ENCODE measurements at regions of chr22 and their contacts with region 1.

Region 1: DNA sequence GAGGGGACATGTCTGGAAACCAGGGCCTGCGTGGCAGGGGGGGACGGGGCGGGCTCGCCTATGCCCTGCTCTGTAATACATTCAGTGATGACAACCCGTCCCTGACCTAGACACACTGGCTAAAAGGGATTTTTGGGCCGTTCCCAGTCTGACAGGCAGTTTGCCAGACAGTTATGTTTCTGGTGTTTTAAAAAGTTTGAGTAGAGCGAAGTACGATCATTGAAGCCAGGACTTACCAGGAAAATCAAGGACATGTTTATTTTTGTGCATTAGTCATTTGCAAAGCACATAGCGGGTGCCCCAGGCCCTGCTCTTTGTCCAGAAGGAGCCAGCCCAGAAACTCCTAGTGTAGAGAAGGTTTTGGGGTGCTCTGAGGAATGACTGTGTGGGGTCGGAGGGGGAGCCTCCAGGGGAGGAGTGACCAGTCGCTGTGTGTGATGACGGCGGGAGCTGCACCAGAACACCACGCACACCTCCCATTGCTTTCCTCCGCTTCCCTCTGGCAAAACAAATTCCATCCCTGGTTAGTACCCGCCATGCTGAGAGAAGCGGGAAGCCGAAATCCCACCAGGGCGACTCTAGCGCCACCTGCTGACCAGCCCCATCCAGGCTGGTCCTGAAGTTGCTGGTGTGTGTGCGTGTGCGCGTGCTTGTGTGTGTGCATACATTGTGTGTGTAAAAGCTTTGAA is 50.8 kb downstream of the FBLN1 start:
- DNase-seq: peak; percentile 76
- H3K4me3 ChIP-seq: no peak overlapping the region
- H3K27ac ChIP-seq: peak overlapping the region; percentile 37
- H3K4me1 ChIP-seq: no peaks in the 10 kb centered on the region
- H3K27me3 ChIP-seq: no peaks in the 10 kb centered on the region
- CTCF ChIP-seq: peak; percentile 82

Region 2: GRCh38 chr22:45268958-45269844 is 284.3 kb before region 1 on chr22:
- intact Hi-C with region 1: loop called (anchors 5 kb)
- DNase-seq: peak; percentile 87
- H3K4me3 ChIP-seq: peak overlapping the region; percentile 36
- H3K27ac ChIP-seq: no peak overlapping the region
- H3K4me1 ChIP-seq: peaks cover 18% of the 10 kb centered on the region
- H3K27me3 ChIP-seq: no peaks in the 10 kb centered on the region
- CTCF ChIP-seq: peak; percentile 82

Region 3: DNA sequence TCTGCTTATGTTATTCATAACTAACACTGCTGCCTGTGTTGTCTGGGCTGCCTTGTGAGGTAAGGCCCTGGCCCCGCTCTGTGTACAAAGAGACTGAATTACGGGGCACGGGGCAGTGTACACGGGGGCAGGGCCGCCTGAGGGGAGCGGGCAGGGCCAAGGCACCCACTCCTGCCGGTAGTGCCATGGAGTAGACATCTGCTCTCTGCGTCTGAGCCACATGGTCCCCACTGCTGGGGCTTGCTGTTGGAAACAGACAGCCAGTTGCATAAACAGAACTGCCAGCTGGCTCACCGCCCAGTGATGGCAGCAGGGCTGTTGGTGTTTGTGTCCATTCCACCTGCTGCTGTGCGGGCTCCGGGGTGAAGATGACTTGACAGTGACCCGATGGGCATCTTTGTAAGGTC is 224.0 kb before region 1 on chr22:
- intact Hi-C with region 1: loop called (anchors 10 kb)
- DNase-seq: no peak
- H3K4me3 ChIP-seq: no peak overlapping the region
- H3K27ac ChIP-seq: no peak overlapping the region
- H3K4me1 ChIP-seq: no peaks in the 10 kb centered on the region
- H3K27me3 ChIP-seq: no peaks in the 10 kb centered on the region
- CTCF ChIP-seq: no peak

Region 4: GRCh38 chr22:45441138-45441537 is 112.4 kb before region 1 on chr22:
- intact Hi-C with region 1: loop called (anchors 5 kb)
- DNase-seq: peak; percentile 51
- H3K4me3 ChIP-seq: no peak overlapping the region
- H3K27ac ChIP-seq: no peak overlapping the region
- H3K4me1 ChIP-seq: no peaks in the 10 kb centered on the region
- H3K27me3 ChIP-seq: no peaks in the 10 kb centered on the region
- CTCF ChIP-seq: peak; percentile 49

Region 5: GRCh38 chr22:45452565-45453379 is 100.7 kb before region 1 on chr22:
- intact Hi-C with region 1: no loop called
- DNase-seq: no peak
- H3K4me3 ChIP-seq: no peak overlapping the region
- H3K27ac ChIP-seq: no peak overlapping the region
- H3K4me1 ChIP-seq: no peaks in the 10 kb centered on the region
- H3K27me3 ChIP-seq: no peaks in the 10 kb centered on the region
- CTCF ChIP-seq: no peak